Activated naive CD4-positive, alpha-beta T cell treated with anti-CD3 and anti-CD28 coated beads for 36 hours (primary cell): ENCODE measurements at regions of chr11 and their contacts with region 1.

Region 1: DNA sequence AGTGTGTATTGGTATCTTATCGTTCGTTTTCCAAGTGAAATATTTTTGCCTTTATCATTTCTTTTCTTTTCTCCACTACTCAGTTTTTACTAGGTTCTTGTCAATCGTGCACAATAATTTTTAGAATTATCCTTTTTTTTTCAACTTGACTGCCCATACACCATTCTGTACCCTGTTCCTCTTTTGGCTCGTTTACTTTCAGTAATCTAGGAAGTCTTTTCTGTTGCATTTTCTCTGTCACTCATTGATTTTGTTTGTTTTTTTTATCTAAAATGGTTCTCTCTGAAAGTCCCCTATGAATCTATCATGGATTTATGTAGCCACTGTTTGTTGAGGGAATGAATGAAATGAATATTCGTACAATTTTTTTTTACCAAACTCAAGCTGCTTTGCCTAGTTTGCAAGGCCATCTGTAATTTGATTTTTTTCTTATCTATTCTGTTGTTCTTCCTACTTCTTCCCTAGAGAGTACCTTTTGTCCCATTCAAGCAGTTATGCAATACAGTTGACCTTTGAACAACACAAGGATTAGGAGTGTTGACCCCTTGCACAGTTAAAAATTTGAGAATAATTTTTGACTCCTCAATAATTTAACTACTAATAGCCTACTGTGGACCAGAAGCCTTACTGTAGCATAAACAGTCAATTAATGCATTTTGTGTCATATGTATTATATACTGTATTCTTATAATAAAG is 166.3 kb downstream of the TMEM135 start:
- DNase-seq: no peak
- H3K4me3 Mint-ChIP-seq: no peak overlapping the region
- H3K27ac Mint-ChIP-seq: no peak overlapping the region
- H3K4me1 Mint-ChIP-seq: no peaks in the 10 kb centered on the region
- H3K27me3 Mint-ChIP-seq: no peaks in the 10 kb centered on the region

Region 2: DNA sequence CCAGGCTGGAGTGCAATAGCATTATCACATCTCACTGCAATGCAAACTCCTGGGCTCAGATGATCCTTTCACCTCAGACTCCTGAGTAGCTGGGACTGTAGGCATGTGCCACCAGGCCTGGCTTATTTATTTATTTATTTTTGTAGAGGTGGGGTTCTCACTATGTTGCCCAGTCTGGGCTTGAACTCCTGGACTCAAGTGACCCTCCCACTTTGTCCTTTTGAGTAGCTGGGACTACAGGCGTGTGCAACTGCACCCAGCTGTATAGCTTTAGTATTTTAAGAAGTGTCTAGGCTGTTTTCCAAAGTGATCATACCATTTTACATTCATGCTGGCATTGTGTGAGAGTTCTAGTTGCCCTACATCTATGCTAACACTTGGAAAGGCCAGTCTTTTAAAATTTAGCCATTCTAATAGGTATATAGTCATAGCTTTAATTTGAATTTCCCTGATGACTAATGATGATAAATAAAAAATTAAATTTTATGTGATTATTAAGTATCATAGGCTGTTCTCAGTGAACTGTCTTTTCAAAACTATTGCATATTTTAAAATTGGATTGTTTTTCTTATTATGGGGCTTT is 69.4 kb before region 1 on chr11:
- CTCF ChIA-PET with region 1: no interaction called
- intact Hi-C with region 1: loop called (anchors 5 kb)
- DNase-seq: no peak
- H3K4me3 Mint-ChIP-seq: no peak overlapping the region
- H3K27ac Mint-ChIP-seq: no peak overlapping the region
- H3K4me1 Mint-ChIP-seq: no peaks in the 10 kb centered on the region
- H3K27me3 Mint-ChIP-seq: no peaks in the 10 kb centered on the region

Region 3: GRCh38 chr11:87347854-87348253 is 143.8 kb after region 1 on chr11:
- CTCF ChIA-PET with region 1: no interaction called
- intact Hi-C with region 1: no loop called
- DNase-seq: no peak
- H3K4me3 Mint-ChIP-seq: no peak overlapping the region
- H3K27ac Mint-ChIP-seq: no peak overlapping the region
- H3K4me1 Mint-ChIP-seq: peaks cover 5% of the 10 kb centered on the region
- H3K27me3 Mint-ChIP-seq: peaks cover 6% of the 10 kb centered on the region

Region 4: GRCh38 chr11:87572881-87573280 is 368.8 kb after region 1 on chr11:
- CTCF ChIA-PET with region 1: no interaction called
- intact Hi-C with region 1: no loop called
- DNase-seq: no peak
- H3K4me3 Mint-ChIP-seq: no peak overlapping the region
- H3K27ac Mint-ChIP-seq: no peak overlapping the region
- H3K4me1 Mint-ChIP-seq: no peaks in the 10 kb centered on the region
- H3K27me3 Mint-ChIP-seq: no peaks in the 10 kb centered on the region